Activated CD8-positive, alpha-beta memory T cell treated with anti-CD3 and anti-CD28 coated beads, Interleukin-2, amount 10 ng/mL, durations not matched to agents 7 days and 5 days (primary cell): ENCODE measurements at regions of chr6 and their contacts with region 1.

Region 1: GRCh38 chr6:137799950-137800568 is 67.0 kb upstream of the TNFAIP3 start:
- DNase-seq: peak; percentile 77
- ATAC-seq: peak; percentile 90
- H3K4me3 Mint-ChIP-seq: no peak overlapping the region
- H3K27ac Mint-ChIP-seq: peak overlapping the region; percentile 62
- H3K4me1 Mint-ChIP-seq: peaks cover 55% of the 10 kb centered on the region
- H3K27me3 Mint-ChIP-seq: no peaks in the 10 kb centered on the region

Region 2: DNA sequence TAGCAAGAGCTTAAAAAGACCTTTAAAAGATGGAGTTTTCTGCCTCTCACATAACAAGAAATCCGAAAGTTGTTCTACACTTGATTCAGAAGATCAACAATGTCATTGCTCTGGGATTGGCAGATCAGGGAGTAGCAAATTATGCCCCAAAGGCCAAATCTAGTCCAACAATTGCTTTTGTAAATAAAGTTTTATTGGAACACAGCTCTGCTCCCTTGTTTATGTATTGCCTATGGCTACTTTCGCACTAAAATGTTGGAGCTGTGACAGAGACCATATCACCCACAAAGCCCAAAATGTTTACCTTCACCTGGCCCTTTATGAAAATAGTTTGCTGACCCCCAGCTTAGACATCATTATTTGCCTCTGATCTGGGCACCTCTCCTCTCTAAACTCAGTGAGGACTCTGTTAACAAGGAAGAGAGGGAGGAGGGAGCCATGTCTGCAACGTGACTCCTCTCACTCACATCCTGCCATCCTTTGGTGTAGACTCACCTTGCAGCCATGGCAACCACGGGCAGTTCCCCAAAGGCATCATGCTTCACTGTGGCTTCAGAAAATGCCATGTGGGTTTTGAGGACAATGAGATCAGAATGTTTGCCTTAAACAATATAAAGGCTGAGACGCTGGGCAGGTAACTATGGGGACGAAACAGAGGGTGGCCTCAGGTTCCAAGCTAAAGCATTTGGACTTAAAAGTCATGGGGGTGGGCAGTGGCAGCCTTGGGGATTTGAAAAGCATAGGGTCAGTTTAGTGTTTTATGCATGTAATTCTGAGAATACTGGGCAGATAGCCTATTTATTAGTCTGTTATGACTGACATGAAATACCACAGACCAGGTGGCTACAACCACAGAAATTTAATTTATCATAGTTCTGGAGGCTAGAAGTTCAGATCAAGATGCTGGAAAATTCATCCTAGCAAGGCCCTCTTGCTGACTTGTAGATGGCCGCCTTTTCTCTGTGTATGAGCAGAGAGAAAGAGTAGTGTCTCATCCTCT is 82.7 kb before region 1 on chr6:
- CTCF ChIA-PET with region 1: interaction called, 19 read pairs
- DNase-seq: peak; percentile 92
- ATAC-seq: peak; percentile 63
- H3K4me3 Mint-ChIP-seq: no peak overlapping the region
- H3K27ac Mint-ChIP-seq: peak overlapping the region; percentile 94
- H3K4me1 Mint-ChIP-seq: peaks cover 52% of the 10 kb centered on the region
- H3K27me3 Mint-ChIP-seq: no peaks in the 10 kb centered on the region

Region 3: DNA sequence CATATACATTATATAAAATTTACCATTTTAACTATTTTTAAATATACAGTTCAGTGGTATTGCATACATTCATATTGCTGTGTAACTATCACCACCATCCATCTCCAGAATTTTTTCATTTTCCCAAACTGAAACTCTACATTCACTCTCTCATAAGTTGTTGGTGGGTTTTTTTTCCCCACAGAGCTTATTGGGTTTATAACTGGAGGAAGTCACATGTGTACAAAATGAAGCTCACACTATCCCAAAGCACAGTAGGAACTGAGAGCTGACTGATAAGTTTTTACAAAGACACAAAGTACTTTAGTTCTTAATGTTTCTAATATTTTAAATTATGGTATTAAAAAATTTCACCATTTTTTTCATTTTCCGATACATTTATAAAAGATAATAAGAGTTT is 11.8 kb before region 1 on chr6:
- CTCF ChIA-PET with region 1: interaction called, 10 read pairs
- DNase-seq: no peak
- ATAC-seq: no peak
- H3K4me3 Mint-ChIP-seq: no peak overlapping the region
- H3K27ac Mint-ChIP-seq: no peak overlapping the region
- H3K4me1 Mint-ChIP-seq: peaks cover 40% of the 10 kb centered on the region
- H3K27me3 Mint-ChIP-seq: no peaks in the 10 kb centered on the region

Region 4: DNA sequence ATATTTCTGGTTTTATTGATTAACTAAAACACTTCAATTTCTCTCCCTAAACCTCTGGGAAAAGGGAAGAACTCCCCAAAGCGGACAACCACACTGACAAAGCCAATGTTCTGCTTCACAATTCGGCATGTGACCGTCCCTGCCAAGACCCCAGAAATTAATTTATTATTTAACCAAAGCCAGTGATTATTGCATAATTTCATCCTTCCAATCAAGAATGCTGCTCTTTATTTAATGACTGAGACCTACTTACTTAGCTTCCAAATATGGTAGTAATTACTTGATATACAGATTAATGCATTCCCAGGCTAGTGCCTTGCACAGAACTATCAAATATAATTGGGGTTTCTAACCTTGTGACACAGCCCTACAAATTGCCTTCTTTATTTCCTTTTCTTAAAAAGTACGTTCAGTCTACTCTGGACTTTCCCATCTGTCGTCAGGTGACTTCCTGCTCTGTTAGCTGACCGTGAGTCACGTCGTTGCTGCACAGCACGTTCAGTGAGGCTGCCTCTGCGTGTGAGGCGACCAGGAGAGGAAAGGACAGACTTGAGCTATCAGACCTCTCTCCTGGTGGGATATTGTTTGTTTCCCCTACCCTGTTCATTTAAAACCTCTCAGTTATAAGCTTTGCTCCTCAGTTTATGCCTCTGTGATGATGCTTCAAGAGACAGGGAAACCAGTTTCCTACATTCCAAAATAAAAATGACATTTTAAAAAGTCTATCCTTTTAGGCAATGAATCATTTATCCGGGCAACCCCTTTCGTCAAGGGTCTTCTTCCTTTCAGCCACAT is 11.3 kb after region 1 on chr6:
- CTCF ChIA-PET with region 1: interaction called, 32 read pairs
- DNase-seq: peak; percentile 92
- ATAC-seq: peak; percentile 97
- H3K4me3 Mint-ChIP-seq: peak overlapping the region; percentile 43
- H3K27ac Mint-ChIP-seq: peak overlapping the region; percentile 92
- H3K4me1 Mint-ChIP-seq: peaks cover 42% of the 10 kb centered on the region
- H3K27me3 Mint-ChIP-seq: no peaks in the 10 kb centered on the region

Region 5: GRCh38 chr6:137823826-137824555 is 23.9 kb after region 1 on chr6:
- CTCF ChIA-PET with region 1: interaction called, 14 read pairs
- DNase-seq: peak; percentile 83
- ATAC-seq: peak; percentile 79
- H3K4me3 Mint-ChIP-seq: peak overlapping the region; percentile 65
- H3K27ac Mint-ChIP-seq: peak overlapping the region; percentile 98
- H3K4me1 Mint-ChIP-seq: peaks cover 77% of the 10 kb centered on the region
- H3K27me3 Mint-ChIP-seq: no peaks in the 10 kb centered on the region

Region 6: DNA sequence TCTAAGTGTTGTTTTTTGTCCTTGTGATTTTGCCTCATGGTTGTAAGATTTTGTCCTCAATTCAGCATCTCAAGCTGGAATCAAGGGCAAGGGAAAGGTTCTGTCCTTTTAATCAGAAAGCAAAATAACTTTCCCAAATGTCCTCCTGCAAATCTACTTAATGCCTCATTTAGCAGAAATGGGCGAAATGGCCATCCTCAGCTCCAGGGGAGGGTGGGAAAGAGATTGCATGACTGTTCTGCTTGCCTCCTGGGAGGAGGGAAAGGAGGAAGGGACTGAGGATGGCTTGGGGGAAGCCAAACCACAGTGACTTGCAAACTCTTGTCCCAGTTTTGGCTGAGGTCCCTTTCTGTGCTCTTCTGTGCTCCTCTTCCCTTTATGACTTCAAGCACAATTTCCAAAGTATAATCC is 110.4 kb after region 1 on chr6:
- CTCF ChIA-PET with region 1: no interaction called
- DNase-seq: no peak
- ATAC-seq: no peak
- H3K4me3 Mint-ChIP-seq: no peak overlapping the region
- H3K27ac Mint-ChIP-seq: no peak overlapping the region
- H3K4me1 Mint-ChIP-seq: peaks cover 46% of the 10 kb centered on the region
- H3K27me3 Mint-ChIP-seq: no peaks in the 10 kb centered on the region

Region 7: DNA sequence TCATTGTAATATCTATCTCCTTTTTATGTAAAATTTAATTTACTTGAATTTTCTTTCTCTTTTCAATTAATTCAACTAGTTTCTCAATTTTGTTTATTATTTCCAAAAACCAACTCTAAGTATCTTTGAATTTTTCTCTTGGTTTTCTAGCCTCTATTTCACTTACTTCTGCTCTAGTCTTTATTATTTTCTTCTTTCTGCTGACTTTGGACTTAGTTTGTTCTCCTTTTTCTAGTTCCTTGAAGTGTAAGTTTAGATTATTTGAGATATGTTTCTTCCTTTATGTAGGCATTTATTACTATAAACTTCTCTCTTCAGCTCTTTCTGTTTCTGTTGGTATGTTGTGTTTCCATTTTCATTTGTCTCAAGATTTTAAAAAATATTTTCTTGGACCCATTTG is 137.8 kb after region 1 on chr6:
- CTCF ChIA-PET with region 1: interaction called, 17 read pairs
- DNase-seq: no peak
- ATAC-seq: no peak
- H3K4me3 Mint-ChIP-seq: no peak overlapping the region
- H3K27ac Mint-ChIP-seq: no peak overlapping the region
- H3K4me1 Mint-ChIP-seq: peaks cover 30% of the 10 kb centered on the region
- H3K27me3 Mint-ChIP-seq: no peaks in the 10 kb centered on the region

Region 8: GRCh38 chr6:137944793-137945498 is 144.9 kb after region 1 on chr6:
- CTCF ChIA-PET with region 1: interaction called, 17 read pairs
- DNase-seq: peak; percentile 47
- ATAC-seq: peak; percentile 73
- H3K4me3 Mint-ChIP-seq: no peak overlapping the region
- H3K27ac Mint-ChIP-seq: no peak overlapping the region
- H3K4me1 Mint-ChIP-seq: peaks cover 45% of the 10 kb centered on the region
- H3K27me3 Mint-ChIP-seq: no peaks in the 10 kb centered on the region